Esophagus squamous epithelium (tissue), 5 donors: ENCODE measurements at regions of chr1 and their contacts with region 1.

Region 1: GRCh38 chr1:84433258-84434080 is 35.2 kb downstream of the DNASE2B start:
- DNase-seq: no peak
- H3K4me3 ChIP-seq: peak overlapping the region in 1 of 4 donors; percentile 39
- H3K27ac ChIP-seq: no peak overlapping the region
- H3K4me1 ChIP-seq: peaks cover 0 to 16% (median 0%) of the 10 kb centered on the region in 3 donors
- H3K27me3 ChIP-seq: no peaks in the 10 kb centered on the region
- CTCF ChIP-seq: peak; percentile 53 to 78 (median 76)
- POLR2A ChIP-seq: no peak

Region 2: DNA sequence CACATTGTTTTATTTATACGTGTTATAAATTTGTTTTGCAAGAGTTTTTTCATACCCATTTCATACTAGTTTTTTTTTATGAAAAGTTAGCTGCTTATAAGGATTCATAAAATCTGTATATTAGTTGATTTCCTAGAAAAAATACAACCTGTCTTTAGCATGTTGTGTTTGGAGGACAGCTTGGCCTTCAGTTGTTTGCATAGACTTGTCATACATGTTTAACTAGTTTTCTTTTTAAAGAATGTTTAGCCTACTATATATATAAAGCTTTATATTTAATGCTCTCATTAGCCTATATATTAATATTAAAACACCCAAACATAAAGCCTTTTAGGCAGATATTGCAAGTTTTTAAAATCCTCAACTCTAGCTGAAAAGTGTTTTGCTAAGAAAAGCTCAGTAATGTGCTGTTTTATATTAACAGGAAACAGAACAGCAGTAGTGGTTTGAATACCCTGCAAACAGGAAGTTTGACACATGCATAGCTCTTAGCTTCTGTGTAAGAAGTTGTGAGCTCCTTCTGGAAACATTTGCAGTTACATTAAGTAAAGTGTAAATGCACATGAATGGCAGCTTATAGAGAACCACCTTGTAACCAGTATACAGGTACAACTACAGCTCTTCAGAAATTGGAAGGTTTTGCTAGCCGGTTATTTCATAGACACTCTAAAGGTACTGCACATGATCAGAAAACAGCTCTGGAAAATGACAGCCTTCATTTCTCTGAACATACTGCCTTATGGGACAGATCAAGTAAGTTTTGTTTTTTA is 289.5 kb before region 1 on chr1 and contains the start of gene PRKACB:
- intact Hi-C with region 1: loop called (anchors 5 kb)
- DNase-seq: no peak
- H3K4me3 ChIP-seq: peak within 1 kb of the TSS in 3 of 4 donors; percentile 10 to 44 (median 20)
- H3K27ac ChIP-seq: peak within 1 kb of the TSS; percentile 53 to 67 (median 62)
- H3K4me1 ChIP-seq: peaks cover 0 to 19% (median 4%) of the 10 kb centered on the region in 3 donors
- H3K27me3 ChIP-seq: no peaks in the 10 kb centered on the region
- CTCF ChIP-seq: no peak
- POLR2A ChIP-seq: peak in 1 of 4 donors; percentile 40
- total RNA-seq, gene PRKACB: 3.7 to 18.3 (median 11.3) TPM

Region 3: DNA sequence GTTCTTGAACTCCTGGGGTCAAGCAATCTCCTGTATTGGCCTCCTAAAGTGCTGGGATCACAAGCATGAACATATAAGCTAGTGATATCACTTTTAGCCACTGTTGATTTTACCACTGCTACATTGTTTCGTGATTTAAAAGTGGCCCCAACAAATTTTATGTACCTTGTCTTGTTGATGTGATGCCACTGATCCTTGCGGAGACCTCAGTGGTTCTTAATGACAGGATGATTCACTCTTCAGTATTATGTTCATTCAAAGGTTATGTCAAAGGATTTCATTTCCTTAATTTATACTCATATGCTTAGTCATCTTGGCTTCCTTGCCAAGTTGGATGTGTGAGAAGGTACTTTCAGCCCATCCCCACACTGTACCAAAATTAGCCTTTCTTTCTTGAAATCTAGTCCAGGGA is 277.3 kb before region 1 on chr1:
- intact Hi-C with region 1: no loop called
- DNase-seq: no peak
- H3K4me3 ChIP-seq: no peak overlapping the region
- H3K27ac ChIP-seq: no peak overlapping the region
- H3K4me1 ChIP-seq: peaks cover 0 to 15% (median 4%) of the 10 kb centered on the region in 3 donors
- H3K27me3 ChIP-seq: no peaks in the 10 kb centered on the region
- CTCF ChIP-seq: no peak
- POLR2A ChIP-seq: no peak

Region 4: DNA sequence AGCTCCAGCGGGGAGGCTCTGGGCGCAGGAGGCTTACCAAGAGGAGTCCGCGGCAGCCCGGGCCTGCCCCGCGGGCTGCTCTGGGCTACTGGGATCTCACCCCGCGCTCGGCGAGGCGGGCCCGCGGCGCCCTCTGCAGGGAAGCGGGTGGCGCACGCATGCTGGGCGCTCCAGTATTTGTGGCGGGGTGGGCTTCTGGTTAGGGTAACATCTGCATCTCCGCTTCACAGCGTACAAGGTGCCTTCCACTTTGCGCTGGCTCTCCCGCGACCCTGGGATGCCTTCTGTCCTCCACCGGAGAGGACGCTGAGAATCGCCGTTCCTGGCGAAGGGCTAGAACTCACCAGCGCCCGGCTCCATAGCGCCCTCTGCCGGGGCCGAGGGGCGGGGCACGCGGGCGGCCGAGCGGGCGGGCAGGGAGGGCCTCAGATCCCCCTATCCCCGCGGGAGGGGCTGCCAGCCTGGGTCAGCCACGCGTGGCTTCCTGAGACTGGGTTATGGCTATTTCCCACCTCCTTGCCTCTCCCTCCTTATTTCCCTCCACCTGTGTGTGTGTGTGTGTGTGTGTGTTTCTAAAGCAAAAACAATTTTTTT is 187.3 kb after region 1 on chr1:
- intact Hi-C with region 1: loop called (anchors 10 kb)
- DNase-seq: no peak
- H3K4me3 ChIP-seq: peak overlapping the region; percentile 39 to 75 (median 56)
- H3K27ac ChIP-seq: peak overlapping the region; percentile 41 to 72 (median 58)
- H3K4me1 ChIP-seq: peaks cover 4 to 24% (median 16%) of the 10 kb centered on the region in 3 donors
- H3K27me3 ChIP-seq: peaks cover 0 to 7% (median 0%) of the 10 kb centered on the region in 4 donors
- CTCF ChIP-seq: peak; percentile 76 to 97 (median 88)
- POLR2A ChIP-seq: no peak